Activated naive CD4-positive, alpha-beta T cell treated with anti-CD3 and anti-CD28 coated beads for 36 hours (primary cell): ENCODE measurements at regions of chr10 and their contacts with region 1.

Region 1: DNA sequence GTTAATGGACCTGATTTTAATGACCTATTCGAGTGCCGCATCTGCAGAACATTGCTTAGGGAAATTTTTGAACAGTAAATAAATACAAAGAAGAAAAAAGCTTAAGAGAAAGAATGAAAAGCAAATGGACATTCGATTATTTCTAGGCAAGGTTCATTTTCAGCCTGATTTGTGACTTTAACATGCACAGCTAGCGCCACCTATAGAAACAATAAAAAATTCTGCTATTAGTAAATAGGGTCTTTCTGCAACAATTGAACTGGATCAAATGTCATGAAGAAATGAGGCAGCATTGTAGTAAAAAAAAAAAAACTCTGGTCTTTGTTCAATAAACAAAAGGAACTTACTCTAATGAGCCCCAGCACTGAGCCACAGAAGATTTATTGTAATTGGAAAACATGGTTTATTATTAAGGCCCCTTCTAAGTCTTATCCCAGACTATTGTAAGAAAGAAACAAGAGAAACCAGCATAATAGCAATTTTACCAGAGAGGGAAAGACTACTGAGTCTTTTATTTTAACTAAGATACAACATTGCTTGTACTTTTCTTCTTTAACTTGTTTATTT is 41.4 kb upstream of the GHITM start:
- DNase-seq: no peak
- H3K4me3 Mint-ChIP-seq: no peak overlapping the region
- H3K27ac Mint-ChIP-seq: no peak overlapping the region
- H3K4me1 Mint-ChIP-seq: no peaks in the 10 kb centered on the region
- H3K27me3 Mint-ChIP-seq: peaks cover under 1% of the 10 kb centered on the region

Region 2: GRCh38 chr10:84026544-84027257 is 71.2 kb before region 1 on chr10:
- CTCF ChIA-PET with region 1: no interaction called
- intact Hi-C with region 1: loop called (anchors 2 kb)
- DNase-seq: peak; percentile 41
- H3K4me3 Mint-ChIP-seq: no peak overlapping the region
- H3K27ac Mint-ChIP-seq: no peak overlapping the region
- H3K4me1 Mint-ChIP-seq: no peaks in the 10 kb centered on the region
- H3K27me3 Mint-ChIP-seq: no peaks in the 10 kb centered on the region

Region 3: GRCh38 chr10:84114088-84114667 is 16.3 kb after region 1 on chr10:
- CTCF ChIA-PET with region 1: no interaction called
- intact Hi-C with region 1: no loop called
- DNase-seq: no peak
- H3K4me3 Mint-ChIP-seq: no peak overlapping the region
- H3K27ac Mint-ChIP-seq: no peak overlapping the region
- H3K4me1 Mint-ChIP-seq: no peaks in the 10 kb centered on the region
- H3K27me3 Mint-ChIP-seq: peaks cover 4% of the 10 kb centered on the region

Region 4: DNA sequence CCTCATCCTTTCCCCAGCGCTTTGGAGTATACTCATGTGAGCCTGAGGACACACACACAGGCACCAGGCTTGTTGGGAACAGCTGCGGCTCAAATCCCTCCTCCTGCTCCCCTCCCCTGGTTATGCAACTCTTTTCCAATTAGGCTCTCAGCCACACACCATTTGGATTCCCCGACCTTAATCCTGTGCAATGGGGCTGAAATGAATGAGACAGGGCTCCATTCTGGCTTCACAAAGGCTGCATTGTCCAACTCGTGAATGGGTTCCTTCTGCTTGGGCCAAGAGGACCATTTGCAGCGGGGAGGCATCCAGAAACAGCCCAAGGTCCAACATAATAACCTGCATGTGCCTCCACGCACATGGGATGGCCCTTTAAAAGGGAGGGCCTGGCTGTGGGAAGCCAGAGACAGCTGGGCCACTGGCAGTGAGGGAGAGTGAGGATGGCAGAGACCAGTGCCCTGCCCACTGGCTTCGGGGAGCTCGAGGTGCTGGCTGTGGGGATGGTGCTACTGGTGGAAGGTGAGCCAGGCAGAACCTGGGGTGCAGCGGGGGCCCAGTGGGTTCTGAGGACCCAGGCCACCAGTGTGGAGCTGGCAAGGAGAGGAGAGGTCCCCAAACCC is 146.9 kb after region 1 on chr10 and contains the start of gene RGR:
- CTCF ChIA-PET with region 1: no interaction called
- intact Hi-C with region 1: no loop called
- DNase-seq: no peak
- H3K4me3 Mint-ChIP-seq: no peak within 1 kb of the TSS
- H3K27ac Mint-ChIP-seq: no peak within 1 kb of the TSS
- H3K4me1 Mint-ChIP-seq: no peaks in the 10 kb centered on the region
- H3K27me3 Mint-ChIP-seq: peaks cover 3% of the 10 kb centered on the region
- total RNA-seq, gene RGR: not detected